GM10248 (cell line): ENCODE measurements at regions of chr17 and their contacts with region 1.

Region 1: GRCh38 chr17:78112518-78113226 is 15.9 kb downstream of the TMC6 start:
- DNase-seq: peak; percentile 89
- CTCF ChIP-seq: peak; percentile 97

Region 2: GRCh38 chr17:78089576-78090281 is 22.9 kb before region 1 on chr17:
- CTCF ChIA-PET with region 1: interaction called, 14 read pairs
- POLR2A ChIA-PET with region 1: no interaction called
- DNase-seq: no peak
- CTCF ChIP-seq: no peak

Region 3: GRCh38 chr17:78128551-78129350 is 16.1 kb after region 1 on chr17 and contains the start of gene TMC6:
- CTCF ChIA-PET with region 1: interaction called, 16 read pairs
- POLR2A ChIA-PET with region 1: interaction called, 5 read pairs
- DNase-seq: peak; percentile 89
- CTCF ChIP-seq: no peak